ENCODE measurements at regions of chr2 and their contacts with region 1.

Region 1: GRCh38 chr2:222707689-222708525 is 36.4 kb downstream of the MOGAT1 start:
- DNase-seq: peak; percentile 83 to 95
- ATAC-seq: peak; percentile 86
- H3K4me3 ChIP-seq: no peak overlapping the region
- H3K27ac ChIP-seq: no peak overlapping the region
- H3K4me1 ChIP-seq: peaks cover 3 to 6% of the 10 kb centered on the region in 2 donors
- H3K27me3 ChIP-seq: no peaks in the 10 kb centered on the region

Region 2: GRCh38 chr2:222753251-222753824 is 45.4 kb after region 1 on chr2:
- intact Hi-C with region 1: loop called in 1 of 2 experiments (anchors 5 kb)
- DNase-seq: no peak
- ATAC-seq: peak; percentile 67
- H3K4me3 ChIP-seq: no peak overlapping the region
- H3K27ac ChIP-seq: peak overlapping the region; percentile 60 to 95
- H3K4me1 ChIP-seq: peaks cover 7 to 12% of the 10 kb centered on the region in 2 donors
- H3K27me3 ChIP-seq: no peaks in the 10 kb centered on the region

Region 3: DNA sequence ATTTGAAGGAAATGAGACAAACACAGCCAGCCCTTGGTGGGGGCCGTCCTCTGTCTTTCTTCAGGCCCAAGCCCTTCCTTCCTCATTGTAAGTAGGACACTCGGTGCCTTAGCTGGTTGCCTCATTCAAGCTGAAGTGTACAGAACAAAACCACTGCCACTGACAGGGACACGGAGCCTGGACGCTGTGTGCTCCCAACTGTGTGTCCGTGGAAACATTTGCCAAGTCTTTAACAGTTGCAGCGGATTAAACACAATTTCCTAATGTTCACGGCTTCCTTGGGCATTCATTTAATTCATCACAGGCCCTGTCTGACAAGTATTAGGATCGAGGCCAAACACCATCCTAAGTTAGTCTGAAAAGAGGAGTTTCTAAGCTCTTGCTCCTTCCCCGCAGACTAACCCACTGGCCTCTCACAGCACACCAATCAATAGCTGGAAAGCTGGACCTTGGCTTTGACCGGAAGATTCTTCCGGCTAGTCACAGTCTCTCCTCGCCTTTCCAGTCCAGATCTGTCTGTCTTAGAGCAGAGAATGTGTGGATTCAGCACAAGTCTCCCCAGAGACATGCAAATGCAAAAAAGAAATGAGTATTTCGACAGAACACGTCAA is 84.2 kb after region 1 on chr2:
- intact Hi-C with region 1: loop called (anchors 5 to 10 kb)
- DNase-seq: peak in 1 of 2 donors; percentile 70
- ATAC-seq: peak; percentile 63
- H3K4me3 ChIP-seq: no peak overlapping the region
- H3K27ac ChIP-seq: peak overlapping the region in 1 of 2 donors; percentile 89
- H3K4me1 ChIP-seq: peaks cover 0 to 5% of the 10 kb centered on the region in 2 donors
- H3K27me3 ChIP-seq: no peaks in the 10 kb centered on the region

Region 4: GRCh38 chr2:222797261-222797660 is 89.4 kb after region 1 on chr2:
- intact Hi-C with region 1: loop called in 1 of 2 experiments (anchors 10 kb)
- DNase-seq: no peak
- ATAC-seq: no peak
- H3K4me3 ChIP-seq: no peak overlapping the region
- H3K27ac ChIP-seq: no peak overlapping the region
- H3K4me1 ChIP-seq: peaks cover 0 to 5% of the 10 kb centered on the region in 2 donors
- H3K27me3 ChIP-seq: no peaks in the 10 kb centered on the region

Region 5: DNA sequence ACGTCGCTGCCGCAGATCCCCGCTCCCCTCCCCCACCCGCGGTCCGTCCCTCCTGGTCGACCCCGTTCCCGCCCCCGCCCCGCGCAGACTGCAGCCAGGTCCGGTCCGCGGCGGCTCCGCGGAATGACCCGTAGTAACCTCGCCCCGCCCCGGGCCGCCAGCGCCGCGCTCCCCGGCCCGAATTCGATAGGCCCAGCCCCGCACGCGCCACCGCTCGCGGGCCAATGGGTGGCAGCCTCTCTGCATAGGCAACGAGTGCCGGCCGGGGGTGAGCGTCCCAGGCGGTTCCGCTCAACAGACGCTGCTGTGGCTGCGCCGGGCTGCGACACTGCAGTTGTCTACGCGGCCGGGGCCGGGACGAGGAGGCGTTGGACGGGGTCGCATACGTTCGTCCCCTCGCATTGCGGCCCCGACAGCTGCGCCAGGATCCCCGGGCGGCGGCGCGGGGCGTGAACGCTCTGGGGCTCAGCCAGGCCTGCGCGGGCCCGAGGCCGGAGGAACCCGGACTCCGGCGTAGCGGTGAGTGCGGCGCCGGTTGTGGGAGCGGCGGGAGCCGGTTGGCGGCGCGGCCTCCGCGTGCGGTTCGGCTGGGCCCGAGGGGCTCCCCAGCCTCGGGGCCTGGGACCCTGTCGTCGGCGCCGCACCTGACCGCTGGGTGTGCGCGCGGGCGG is 153.0 kb after region 1 on chr2 and contains the start of gene ACSL3:
- intact Hi-C with region 1: loop called (anchors 2 to 5 kb)
- DNase-seq: peak; percentile 98
- ATAC-seq: peak; percentile 98
- H3K4me3 ChIP-seq: peak within 1 kb of the TSS; percentile 80 to 93
- H3K27ac ChIP-seq: peak within 1 kb of the TSS; percentile 79 to 84
- H3K4me1 ChIP-seq: peaks cover 7 to 9% of the 10 kb centered on the region in 2 donors
- H3K27me3 ChIP-seq: no peaks in the 10 kb centered on the region
- total RNA-seq, gene ACSL3: 66.5 to 69.0 TPM

Region 6: GRCh38 chr2:222903234-222904220 is 195.6 kb after region 1 on chr2:
- intact Hi-C with region 1: loop called (anchors 5 kb)
- DNase-seq: no peak
- ATAC-seq: peak; percentile 79
- H3K4me3 ChIP-seq: no peak overlapping the region
- H3K27ac ChIP-seq: peak overlapping the region in 1 of 2 donors; percentile 71
- H3K4me1 ChIP-seq: peaks cover 6 to 10% of the 10 kb centered on the region in 2 donors
- H3K27me3 ChIP-seq: no peaks in the 10 kb centered on the region

Measured in aorta (tissue), 5 donors.